PC-3 (cell line): ENCODE measurements at regions of chr1 and their contacts with region 1.

Region 1: DNA sequence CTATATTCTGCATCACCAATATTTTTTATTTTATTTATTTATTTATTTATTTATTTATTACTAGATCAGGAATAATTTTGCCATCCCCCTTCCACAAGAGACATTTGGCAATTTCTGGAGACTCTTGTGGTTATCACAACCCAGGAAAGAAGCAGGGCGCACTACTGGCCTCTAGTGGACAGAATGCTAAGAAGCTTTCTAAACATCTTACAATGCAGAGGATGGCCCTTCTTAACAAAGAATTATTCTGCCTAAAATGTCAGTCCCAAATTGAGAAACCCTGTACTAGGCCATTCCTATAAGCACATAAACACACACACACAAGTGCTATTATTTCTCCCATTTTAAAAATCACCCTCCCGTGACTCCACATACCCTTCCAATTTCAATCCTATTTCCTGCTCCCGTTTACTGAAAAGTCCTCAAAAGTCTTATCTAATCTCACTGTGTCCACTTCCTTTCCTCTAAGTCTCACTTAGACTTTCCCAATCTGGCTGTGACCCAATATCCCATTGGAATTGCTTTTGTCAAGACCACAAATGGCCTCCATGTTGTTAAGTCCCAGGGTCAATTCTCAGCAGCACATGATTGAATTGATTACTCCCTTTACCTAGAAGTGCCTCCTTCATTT is 43.7 kb upstream of the RNF11 start:
- DNase-seq: peak; percentile 89
- ATAC-seq: peak; percentile 68
- H3K4me3 ChIP-seq: no peak overlapping the region
- H3K27ac ChIP-seq: no peak overlapping the region
- H3K4me1 ChIP-seq: peaks cover 11% of the 10 kb centered on the region; the same call in 1 of the 2 replicates
- H3K27me3 ChIP-seq: no peaks in the 10 kb centered on the region
- CTCF ChIP-seq: peak; percentile 78

Region 2: GRCh38 chr1:50774759-50775351 is 417.5 kb before region 1 on chr1:
- CTCF ChIA-PET with region 1: interaction called, 5 read pairs
- POLR2A ChIA-PET with region 1: no interaction called
- intact Hi-C with region 1: loop called (anchors 1 kb)
- DNase-seq: peak; percentile 77
- ATAC-seq: peak; percentile 70
- H3K4me3 ChIP-seq: no peak overlapping the region
- H3K27ac ChIP-seq: no peak overlapping the region
- H3K4me1 ChIP-seq: no peaks in the 10 kb centered on the region
- H3K27me3 ChIP-seq: no peaks in the 10 kb centered on the region
- CTCF ChIP-seq: peak; percentile 83

Region 3: DNA sequence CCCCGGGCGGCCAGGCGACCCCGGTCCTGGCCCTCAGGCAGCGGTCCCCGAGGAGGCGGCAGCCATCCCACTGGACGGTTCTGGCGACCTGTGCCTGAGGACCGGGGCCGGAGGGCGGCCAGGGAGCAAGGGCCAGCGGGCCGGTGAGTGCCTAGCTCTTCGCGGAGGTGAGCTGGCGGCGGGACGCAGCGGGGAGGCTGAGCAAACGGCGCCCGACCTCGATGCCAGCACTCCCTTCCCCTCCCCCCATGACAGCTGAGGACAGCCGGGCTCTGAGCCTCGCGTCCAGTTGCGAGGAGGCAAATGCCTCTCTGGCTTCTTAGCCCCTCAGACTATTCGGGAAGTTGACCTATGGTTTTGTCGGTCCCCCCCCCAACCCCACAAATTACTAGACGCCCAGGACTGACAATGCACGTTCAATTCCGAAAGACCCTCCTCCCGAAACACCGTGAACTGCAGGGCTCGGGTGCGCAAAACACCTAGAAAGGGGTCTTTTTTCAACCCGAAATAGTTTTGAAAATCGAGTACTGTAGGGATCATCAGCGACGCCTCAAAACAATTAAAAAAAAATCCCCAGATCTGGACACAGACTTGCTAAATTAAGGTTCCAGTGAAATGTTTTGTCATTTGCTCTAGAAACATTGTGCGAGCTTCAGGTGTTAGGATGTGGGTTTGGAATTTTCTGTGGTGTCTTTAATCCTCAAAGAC is 214.0 kb before region 1 on chr1:
- CTCF ChIA-PET with region 1: no interaction called
- POLR2A ChIA-PET with region 1: no interaction called
- intact Hi-C with region 1: loop called (anchors 2 kb)
- DNase-seq: peak; percentile 74
- ATAC-seq: peak; percentile 53
- H3K4me3 ChIP-seq: peak overlapping the region; percentile 85
- H3K27ac ChIP-seq: peak overlapping the region; percentile 49
- H3K4me1 ChIP-seq: peaks cover 42% of the 10 kb centered on the region
- H3K27me3 ChIP-seq: no peaks in the 10 kb centered on the region
- CTCF ChIP-seq: no peak

Region 4: DNA sequence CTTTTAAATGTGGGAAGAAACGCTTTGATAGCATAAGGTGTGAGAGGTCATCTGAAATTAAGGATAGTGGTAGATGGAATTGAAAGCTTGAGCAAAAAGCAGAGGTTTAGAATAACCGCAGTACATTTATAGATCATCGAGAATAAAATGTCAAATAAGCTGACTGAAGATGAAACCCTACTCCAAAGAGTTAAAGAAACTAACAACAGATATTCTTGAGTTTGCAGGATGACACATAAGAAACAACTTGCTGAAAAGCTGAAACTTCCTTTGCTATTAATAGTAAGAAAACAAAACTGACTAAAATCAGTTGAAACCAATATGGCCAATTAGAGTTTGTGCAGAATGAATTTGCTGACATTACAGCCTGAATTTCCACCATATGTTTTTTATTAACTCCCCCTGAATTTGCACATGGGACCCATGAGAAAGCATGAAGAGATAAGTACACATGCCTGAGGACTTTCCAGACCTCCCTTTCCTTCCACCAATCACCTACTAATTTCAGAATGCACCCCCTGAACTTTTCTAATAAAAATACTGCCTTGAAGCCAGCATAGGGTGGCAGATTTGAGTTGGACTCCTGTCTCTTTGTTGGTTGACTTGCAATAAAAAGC is 92.0 kb before region 1 on chr1:
- CTCF ChIA-PET with region 1: interaction called, 11 read pairs
- POLR2A ChIA-PET with region 1: no interaction called
- intact Hi-C with region 1: no loop called
- DNase-seq: no peak
- ATAC-seq: no peak
- H3K4me3 ChIP-seq: no peak overlapping the region
- H3K27ac ChIP-seq: no peak overlapping the region
- H3K4me1 ChIP-seq: no peaks in the 10 kb centered on the region
- H3K27me3 ChIP-seq: no peaks in the 10 kb centered on the region
- CTCF ChIP-seq: no peak

Region 5: DNA sequence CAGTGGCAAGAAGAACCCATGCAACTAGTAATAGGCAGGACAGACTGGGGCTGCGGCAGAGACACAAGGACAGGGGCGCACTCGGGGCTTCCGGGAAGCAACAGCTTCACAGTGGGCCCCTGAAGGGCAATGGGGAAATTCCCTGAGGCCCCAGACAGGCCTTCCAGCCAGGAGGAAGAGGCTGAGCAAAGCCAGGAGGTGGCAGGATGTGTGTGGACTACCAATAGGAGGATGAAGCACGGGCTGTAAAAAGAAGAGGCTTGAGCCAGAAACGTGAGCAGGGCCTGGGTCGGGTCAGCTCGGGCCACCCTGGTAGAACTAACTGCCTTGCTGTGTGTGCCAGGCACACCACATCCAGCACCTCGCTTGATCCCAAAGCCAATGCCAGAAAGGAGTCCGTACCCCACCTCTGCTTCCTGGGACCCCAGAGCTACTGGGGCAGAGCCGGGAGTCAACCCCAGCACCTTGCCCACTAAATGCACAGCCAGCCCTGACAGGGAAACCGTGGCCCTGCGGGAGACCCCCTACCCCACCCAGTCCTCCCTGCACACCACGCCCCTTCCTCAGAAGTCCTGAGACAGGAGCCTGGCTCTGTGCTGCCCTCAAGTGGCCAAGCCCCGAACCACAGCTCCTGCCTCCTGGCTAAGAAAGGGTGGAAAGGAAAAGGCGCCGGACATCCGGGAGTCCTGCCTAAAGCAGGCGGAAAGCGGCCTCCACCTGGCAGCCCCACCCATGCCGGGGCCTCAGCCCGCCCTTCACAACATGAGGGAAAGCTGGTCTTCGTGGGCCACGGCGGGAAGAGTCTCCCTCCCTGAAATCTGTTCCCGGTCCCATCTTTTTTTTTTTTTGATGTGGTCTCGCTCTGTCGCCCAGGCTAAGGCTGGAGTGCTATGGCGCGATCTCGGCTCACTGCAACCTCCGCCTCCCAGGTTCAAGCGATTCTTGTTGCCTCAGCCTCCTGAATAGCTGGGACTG is 104.3 kb after region 1 on chr1:
- CTCF ChIA-PET with region 1: no interaction called
- POLR2A ChIA-PET with region 1: no interaction called
- intact Hi-C with region 1: loop called (anchors 2 kb)
- DNase-seq: peak; percentile 93
- ATAC-seq: peak; percentile 87
- H3K4me3 ChIP-seq: no peak overlapping the region
- H3K27ac ChIP-seq: no peak overlapping the region
- H3K4me1 ChIP-seq: 0 out of 2 replicates have a peak, but pooled peaks cover 4% of the 10 kb centered on the region
- H3K27me3 ChIP-seq: no peaks in the 10 kb centered on the region
- CTCF ChIP-seq: peak; percentile 89

Region 6: GRCh38 chr1:51750218-51750617 is 557.9 kb after region 1 on chr1:
- CTCF ChIA-PET with region 1: no interaction called
- POLR2A ChIA-PET with region 1: no interaction called
- intact Hi-C with region 1: no loop called
- DNase-seq: peak; percentile 33
- ATAC-seq: peak; percentile 81
- H3K4me3 ChIP-seq: no peak overlapping the region
- H3K27ac ChIP-seq: peak overlapping the region; percentile 65
- H3K4me1 ChIP-seq: peaks cover 20% of the 10 kb centered on the region
- H3K27me3 ChIP-seq: no peaks in the 10 kb centered on the region
- CTCF ChIP-seq: no peak